Calu3 (cell line): ENCODE measurements at regions of chr18 and their contacts with region 1.

Region 1: DNA sequence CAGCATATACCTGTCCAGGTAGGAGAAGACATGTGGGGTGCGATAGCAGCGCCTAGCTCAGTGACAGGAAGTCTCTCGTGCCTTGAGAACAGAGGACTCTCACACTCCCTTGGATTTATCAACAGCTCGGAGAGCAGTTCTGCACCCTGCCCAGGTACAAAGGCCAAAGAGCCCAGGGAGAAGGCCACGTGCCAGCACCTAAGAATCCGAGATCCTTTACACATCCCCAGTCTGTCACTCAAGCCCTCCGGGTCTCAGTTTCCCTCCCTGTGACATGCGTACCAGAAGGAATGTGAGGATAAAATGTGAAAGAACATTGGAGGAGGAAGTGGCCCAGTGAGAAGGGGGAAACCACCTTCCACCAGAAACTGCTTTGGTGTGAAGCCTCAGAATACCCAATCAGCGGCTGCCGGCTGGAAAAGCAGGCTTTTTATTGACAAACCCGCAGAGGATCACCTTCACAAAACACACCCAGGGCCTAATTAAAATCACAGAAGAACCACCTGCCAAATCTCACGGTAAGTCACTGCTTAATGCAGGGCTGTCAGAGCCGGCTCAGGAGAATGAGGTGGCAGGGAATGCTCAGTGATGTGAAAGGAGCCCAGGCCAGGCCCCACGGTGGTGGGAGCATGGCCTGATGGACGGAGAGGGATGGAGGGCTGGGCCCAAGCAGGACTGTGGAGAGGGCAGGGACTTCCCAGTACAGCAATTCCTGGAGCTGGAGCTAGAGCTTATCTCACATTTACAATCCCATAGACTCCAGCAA is 66.3 kb downstream of the MYO5B start:
- DNase-seq: peak; percentile 51
- H3K4me3 Mint-ChIP-seq: peak overlapping the region; percentile 32
- H3K27ac Mint-ChIP-seq: peak overlapping the region; percentile 67
- H3K4me1 Mint-ChIP-seq: peaks cover 71% of the 10 kb centered on the region
- H3K27me3 Mint-ChIP-seq: no peaks in the 10 kb centered on the region
- CTCF ChIP-seq: no peak

Region 2: DNA sequence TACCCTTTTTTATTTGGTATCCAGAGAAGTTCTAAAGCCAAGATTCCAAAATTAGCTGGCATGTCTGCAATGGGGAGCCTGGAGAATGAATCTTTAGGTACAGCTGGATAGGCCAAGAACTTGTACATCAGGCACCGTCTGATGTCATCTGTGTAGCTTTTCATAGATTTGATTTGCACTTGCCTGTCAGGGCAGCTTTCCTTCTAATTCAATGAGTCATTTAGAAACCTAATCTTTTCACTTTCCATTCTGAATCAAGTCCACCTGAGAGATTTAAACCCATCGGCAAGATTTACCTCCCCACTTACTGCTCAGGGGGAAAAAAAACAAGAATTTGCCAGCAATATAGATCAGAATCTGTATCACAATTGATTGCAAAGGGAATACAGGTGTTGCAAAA is 254.5 kb before region 1 on chr18:
- CTCF ChIA-PET with region 1: no interaction called
- intact Hi-C with region 1: no loop called
- DNase-seq: no peak
- H3K4me3 Mint-ChIP-seq: no peak overlapping the region
- H3K27ac Mint-ChIP-seq: no peak overlapping the region
- H3K4me1 Mint-ChIP-seq: no peaks in the 10 kb centered on the region
- H3K27me3 Mint-ChIP-seq: no peaks in the 10 kb centered on the region
- CTCF ChIP-seq: no peak

Region 3: GRCh38 chr18:50158923-50159653 is 30.4 kb after region 1 on chr18:
- CTCF ChIA-PET with region 1: no interaction called
- intact Hi-C with region 1: loop called (anchors 2 kb)
- DNase-seq: peak; percentile 69
- H3K4me3 Mint-ChIP-seq: peak overlapping the region; percentile 57
- H3K27ac Mint-ChIP-seq: peak overlapping the region; percentile 86
- H3K4me1 Mint-ChIP-seq: peaks cover 77% of the 10 kb centered on the region
- H3K27me3 Mint-ChIP-seq: no peaks in the 10 kb centered on the region
- CTCF ChIP-seq: no peak